ENCODE measurements at regions of chr11 and their contacts with region 1.

Region 1: GRCh38 chr11:2400069-2400760 is at the start of gene TSSC4:
- DNase-seq: peak; percentile 100
- ATAC-seq: peak; percentile 90
- H3K4me3 Mint-ChIP-seq: peak within 1 kb of the TSS; percentile 91
- H3K27ac Mint-ChIP-seq: peak within 1 kb of the TSS; percentile 92
- H3K4me1 Mint-ChIP-seq: peaks cover 18% of the 10 kb centered on the region
- H3K27me3 Mint-ChIP-seq: no peaks in the 10 kb centered on the region
- total RNA-seq, gene TSSC4: 45.3 to 49.4 TPM

Region 2: GRCh38 chr11:2377511-2378443 is 22.4 kb before region 1 on chr11:
- CTCF ChIA-PET with region 1: interaction called, 4 read pairs
- POLR2A ChIA-PET with region 1: interaction called, 11 read pairs
- DNase-seq: peak; percentile 57
- ATAC-seq: peak; percentile 37
- H3K4me3 Mint-ChIP-seq: peak overlapping the region; percentile 83
- H3K27ac Mint-ChIP-seq: peak overlapping the region; percentile 78
- H3K4me1 Mint-ChIP-seq: peaks cover 27% of the 10 kb centered on the region
- H3K27me3 Mint-ChIP-seq: peaks cover under 1% of the 10 kb centered on the region

Region 3: DNA sequence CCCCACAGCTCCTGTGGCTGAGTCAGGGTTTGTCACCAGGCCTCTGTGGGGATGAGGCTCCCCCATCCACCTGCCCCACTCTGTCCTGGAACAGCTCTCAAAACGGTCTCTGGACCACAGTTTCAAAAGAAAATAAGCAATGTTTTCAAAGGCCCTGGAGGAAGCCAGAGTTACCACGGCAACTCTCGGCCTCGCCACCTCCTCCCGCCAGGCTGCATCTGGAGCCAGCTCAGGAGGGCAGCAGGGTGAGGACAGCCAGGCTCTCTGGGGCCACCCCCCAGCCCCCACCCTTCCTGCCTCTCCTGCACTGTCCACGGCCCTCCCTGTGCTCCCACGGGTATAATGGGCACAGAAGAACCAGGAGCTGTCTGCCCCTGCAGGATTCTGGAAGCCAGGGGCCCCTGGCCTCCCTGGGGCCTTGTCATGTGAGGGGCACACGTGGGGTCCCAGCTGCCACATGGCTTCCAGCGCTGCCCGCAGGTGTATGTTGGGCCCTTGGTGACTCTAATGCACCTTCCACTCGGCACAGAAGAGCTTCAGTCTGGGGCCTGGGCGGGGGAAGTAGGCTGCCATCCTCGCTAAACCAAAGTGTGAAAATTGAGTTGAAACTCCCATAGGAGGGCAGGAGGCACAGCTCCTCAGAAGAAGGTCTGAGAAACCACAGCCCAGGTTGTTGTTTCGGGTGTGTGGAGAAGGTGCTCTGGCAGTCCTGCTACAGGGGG is 12.8 kb before region 1 on chr11:
- CTCF ChIA-PET with region 1: interaction called, 19 read pairs
- POLR2A ChIA-PET with region 1: interaction called, 36 read pairs
- DNase-seq: peak; percentile 50
- ATAC-seq: peak; percentile 40
- H3K4me3 Mint-ChIP-seq: peak overlapping the region; percentile 28
- H3K27ac Mint-ChIP-seq: peak overlapping the region; percentile 77
- H3K4me1 Mint-ChIP-seq: peaks cover 61% of the 10 kb centered on the region
- H3K27me3 Mint-ChIP-seq: no peaks in the 10 kb centered on the region

Region 4: GRCh38 chr11:2612884-2613571 is 212.8 kb after region 1 on chr11:
- CTCF ChIA-PET with region 1: no interaction called
- POLR2A ChIA-PET with region 1: no interaction called
- DNase-seq: no peak
- ATAC-seq: no peak
- H3K4me3 Mint-ChIP-seq: no peak overlapping the region
- H3K27ac Mint-ChIP-seq: no peak overlapping the region
- H3K4me1 Mint-ChIP-seq: no peaks in the 10 kb centered on the region
- H3K27me3 Mint-ChIP-seq: peaks cover 11% of the 10 kb centered on the region